ENCODE measurements at regions of chr4 and their contacts with region 1.

Region 1: DNA sequence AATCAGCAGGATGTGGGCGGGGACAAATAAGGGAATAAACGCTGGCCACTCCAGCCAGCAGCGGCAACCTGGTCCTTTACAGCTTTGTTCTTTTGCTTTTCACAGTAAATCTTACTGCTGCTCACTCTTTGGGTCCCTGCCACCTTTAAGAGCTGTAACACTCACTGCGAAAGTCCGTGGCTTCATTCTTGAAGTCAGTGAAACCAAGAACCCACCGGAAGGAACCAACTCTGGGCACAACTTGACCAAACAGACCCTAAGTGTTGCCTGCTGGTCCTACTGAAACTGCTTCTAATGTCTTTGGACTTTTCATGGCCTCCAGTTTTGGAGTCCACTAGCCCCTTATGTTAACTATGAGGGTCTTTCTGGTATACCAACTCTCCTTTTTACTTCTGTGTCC is 566.2 kb upstream of the IGFBP7 start:
- DNase-seq: no peak
- ATAC-seq: no peak
- H3K4me3 ChIP-seq: no peak overlapping the region
- H3K4me3 Mint-ChIP-seq: no peak overlapping the region
- H3K27ac ChIP-seq: no peak overlapping the region
- H3K27ac Mint-ChIP-seq: no peak overlapping the region
- H3K4me1 ChIP-seq: no peaks in the 10 kb centered on the region
- H3K4me1 Mint-ChIP-seq: no peaks in the 10 kb centered on the region
- H3K27me3 ChIP-seq: no peaks in the 10 kb centered on the region
- H3K27me3 Mint-ChIP-seq: no peaks in the 10 kb centered on the region
- CTCF ChIP-seq: no peak

Region 2: GRCh38 chr4:57605376-57605775 is 71.0 kb before region 1 on chr4:
- CTCF ChIA-PET with region 1: no interaction called
- POLR2A ChIA-PET with region 1: no interaction called
- intact Hi-C with region 1: loop called (anchors 2 kb)
- DNase-seq: no peak
- ATAC-seq: no peak
- H3K4me3 ChIP-seq: no peak overlapping the region
- H3K4me3 Mint-ChIP-seq: no peak overlapping the region
- H3K27ac ChIP-seq: no peak overlapping the region
- H3K27ac Mint-ChIP-seq: no peak overlapping the region
- H3K4me1 ChIP-seq: no peaks in the 10 kb centered on the region
- H3K4me1 Mint-ChIP-seq: no peaks in the 10 kb centered on the region
- H3K27me3 ChIP-seq: no peaks in the 10 kb centered on the region
- H3K27me3 Mint-ChIP-seq: no peaks in the 10 kb centered on the region
- CTCF ChIP-seq: no peak